ENCODE measurements at regions of chr10 and their contacts with region 1.

Region 1: DNA sequence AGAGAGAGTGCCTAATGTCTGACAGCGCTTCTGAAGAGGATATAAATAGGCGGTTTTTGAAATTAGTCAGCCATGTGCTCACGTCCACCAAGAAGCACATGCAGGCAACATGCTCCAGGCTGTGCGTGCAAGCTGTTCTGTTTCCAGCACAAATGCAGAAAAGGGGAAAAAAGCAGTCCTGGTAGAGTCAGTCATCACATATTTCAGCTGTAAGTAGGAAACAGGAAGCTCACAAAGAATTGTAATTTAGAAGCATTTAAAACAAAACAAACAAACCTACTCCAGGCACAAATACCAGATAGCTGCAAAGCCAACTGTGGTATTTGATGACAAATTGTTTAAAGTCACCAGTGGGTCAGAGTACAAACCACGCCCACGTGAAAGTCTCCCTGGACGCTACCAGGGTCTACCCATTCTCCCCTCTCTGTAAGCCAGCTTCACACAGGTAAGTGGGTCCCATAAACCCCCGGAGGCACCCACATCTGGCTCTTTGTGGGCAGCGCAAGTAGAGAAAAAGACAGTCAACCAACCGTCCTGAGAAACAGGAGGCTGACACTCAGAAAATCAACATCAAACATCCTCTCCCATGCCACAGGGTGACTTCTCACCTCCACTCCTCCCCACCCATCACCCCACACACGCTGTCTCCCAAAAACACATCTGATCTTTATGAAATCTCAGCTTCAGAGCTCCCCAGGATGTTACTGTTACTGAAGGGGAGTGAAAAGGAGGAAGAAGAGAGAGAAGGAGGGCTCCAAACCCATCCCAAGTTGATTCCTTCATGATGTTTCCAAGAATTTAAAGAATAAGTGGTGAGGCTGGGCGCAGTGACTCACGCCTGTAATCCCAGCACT is 186.4 kb downstream of the FAM107B start:
- DNase-seq: peak in 3 of 9 experiments; percentile 55 to 79 (median 65)
- ATAC-seq: peak; percentile 35
- H3K4me3 ChIP-seq: peak overlapping the region; percentile 32 to 34
- H3K4me3 Mint-ChIP-seq: peak overlapping the region; percentile 78
- H3K27ac ChIP-seq: peak overlapping the region; percentile 71 to 82
- H3K27ac Mint-ChIP-seq: peak overlapping the region; percentile 97
- H3K4me1 ChIP-seq: peaks cover 89% of the 10 kb centered on the region
- H3K4me1 Mint-ChIP-seq: peaks cover 92% of the 10 kb centered on the region
- H3K27me3 ChIP-seq: no peaks in the 10 kb centered on the region
- H3K27me3 Mint-ChIP-seq: no peaks in the 10 kb centered on the region
- CTCF ChIP-seq: no peak

Region 2: GRCh38 chr10:14429043-14429700 is 159.1 kb before region 1 on chr10:
- CTCF ChIA-PET with region 1: no interaction called
- POLR2A ChIA-PET with region 1: no interaction called
- intact Hi-C with region 1: no loop called
- DNase-seq: no peak
- ATAC-seq: no peak
- H3K4me3 ChIP-seq: no peak overlapping the region
- H3K4me3 Mint-ChIP-seq: no peak overlapping the region
- H3K27ac ChIP-seq: no peak overlapping the region
- H3K27ac Mint-ChIP-seq: no peak overlapping the region
- H3K4me1 ChIP-seq: no peaks in the 10 kb centered on the region
- H3K4me1 Mint-ChIP-seq: no peaks in the 10 kb centered on the region
- H3K27me3 ChIP-seq: no peaks in the 10 kb centered on the region
- H3K27me3 Mint-ChIP-seq: peaks cover 12% of the 10 kb centered on the region
- CTCF ChIP-seq: no peak

Region 3: GRCh38 chr10:14564268-14564744 is 24.0 kb before region 1 on chr10:
- CTCF ChIA-PET with region 1: interaction called, 4 read pairs
- POLR2A ChIA-PET with region 1: interaction called, 40 read pairs
- intact Hi-C with region 1: loop called (anchors 2 kb)
- DNase-seq: peak in 3 of 9 experiments; percentile 45 to 85 (median 75)
- ATAC-seq: peak; percentile 57
- H3K4me3 ChIP-seq: peak overlapping the region in 1 of 2 experiments; percentile 21
- H3K4me3 Mint-ChIP-seq: peak overlapping the region; percentile 80
- H3K27ac ChIP-seq: peak overlapping the region; percentile 77 to 79
- H3K27ac Mint-ChIP-seq: peak overlapping the region; percentile 98
- H3K4me1 ChIP-seq: peaks cover 90% of the 10 kb centered on the region
- H3K4me1 Mint-ChIP-seq: peaks cover 88% of the 10 kb centered on the region
- H3K27me3 ChIP-seq: no peaks in the 10 kb centered on the region
- H3K27me3 Mint-ChIP-seq: no peaks in the 10 kb centered on the region
- CTCF ChIP-seq: no peak

Region 4: DNA sequence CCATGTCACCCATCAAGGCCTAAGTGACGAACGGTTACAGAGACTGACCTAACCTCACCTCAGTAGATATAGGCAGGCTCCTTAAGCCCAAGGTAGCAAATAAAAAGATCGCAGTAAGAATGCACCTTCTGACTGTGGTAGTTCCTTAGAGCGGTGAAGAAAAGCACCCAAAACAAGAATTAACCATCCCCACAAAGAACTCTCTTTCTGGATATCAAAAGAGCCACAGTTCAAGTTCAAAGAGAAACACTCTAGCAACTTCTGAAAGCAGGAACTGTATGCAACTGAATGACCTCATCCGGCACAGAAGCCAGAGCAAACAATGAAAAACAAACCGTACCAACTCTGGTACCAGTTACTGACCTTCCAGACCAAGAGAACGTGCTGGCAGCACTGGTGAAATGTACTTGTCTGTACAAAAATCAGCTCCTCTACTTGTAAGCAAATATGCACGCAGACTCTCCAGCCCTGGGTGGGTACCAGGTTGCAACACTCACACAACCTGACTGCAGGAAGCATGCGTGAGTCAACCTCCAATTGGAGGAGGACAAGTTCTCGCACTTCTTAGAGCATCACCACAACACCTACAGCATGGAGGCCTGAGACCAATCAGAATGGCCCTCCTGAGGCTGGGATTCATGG is 16.3 kb before region 1 on chr10:
- CTCF ChIA-PET with region 1: interaction called, 5 read pairs
- POLR2A ChIA-PET with region 1: interaction called, 40 read pairs
- intact Hi-C with region 1: loop called (anchors 1 to 2 kb)
- DNase-seq: peak; percentile 46 to 91 (median 68)
- ATAC-seq: peak; percentile 66
- H3K4me3 ChIP-seq: peak overlapping the region; percentile 58 to 65
- H3K4me3 Mint-ChIP-seq: peak overlapping the region; percentile 88
- H3K27ac ChIP-seq: peak overlapping the region; percentile 82 to 89
- H3K27ac Mint-ChIP-seq: peak overlapping the region; percentile 97
- H3K4me1 ChIP-seq: peaks cover 66% of the 10 kb centered on the region
- H3K4me1 Mint-ChIP-seq: peaks cover 89% of the 10 kb centered on the region
- H3K27me3 ChIP-seq: no peaks in the 10 kb centered on the region
- H3K27me3 Mint-ChIP-seq: no peaks in the 10 kb centered on the region
- CTCF ChIP-seq: no peak

Region 5: GRCh38 chr10:14598809-14599764 is 10.8 kb after region 1 on chr10:
- CTCF ChIA-PET with region 1: interaction called, 5 read pairs
- POLR2A ChIA-PET with region 1: interaction called, 5 read pairs
- intact Hi-C with region 1: loop called (anchors 1 to 2 kb)
- DNase-seq: peak in 4 of 9 experiments; percentile 45 to 80 (median 59)
- ATAC-seq: peak; percentile 49
- H3K4me3 ChIP-seq: no peak overlapping the region
- H3K4me3 Mint-ChIP-seq: peak overlapping the region; percentile 35
- H3K27ac ChIP-seq: peak overlapping the region; percentile 52 to 61
- H3K27ac Mint-ChIP-seq: peak overlapping the region; percentile 88
- H3K4me1 ChIP-seq: peaks cover 64% of the 10 kb centered on the region
- H3K4me1 Mint-ChIP-seq: peaks cover 85% of the 10 kb centered on the region
- H3K27me3 ChIP-seq: no peaks in the 10 kb centered on the region
- H3K27me3 Mint-ChIP-seq: no peaks in the 10 kb centered on the region
- CTCF ChIP-seq: no peak

Region 6: GRCh38 chr10:14604181-14605142 is 16.2 kb after region 1 on chr10:
- CTCF ChIA-PET with region 1: interaction called, 4 read pairs
- POLR2A ChIA-PET with region 1: interaction called, 5 read pairs
- intact Hi-C with region 1: loop called (anchors 1 to 2 kb)
- DNase-seq: peak; percentile 39 to 86 (median 73)
- ATAC-seq: peak; percentile 71
- H3K4me3 ChIP-seq: peak overlapping the region; percentile 55 to 66
- H3K4me3 Mint-ChIP-seq: peak overlapping the region; percentile 93
- H3K27ac ChIP-seq: peak overlapping the region; percentile 48
- H3K27ac Mint-ChIP-seq: peak overlapping the region; percentile 94
- H3K4me1 ChIP-seq: peaks cover 44% of the 10 kb centered on the region
- H3K4me1 Mint-ChIP-seq: peaks cover 50% of the 10 kb centered on the region
- H3K27me3 ChIP-seq: no peaks in the 10 kb centered on the region
- H3K27me3 Mint-ChIP-seq: no peaks in the 10 kb centered on the region
- CTCF ChIP-seq: peak; percentile 16

Region 7: GRCh38 chr10:14616955-14617730 is 28.8 kb after region 1 on chr10:
- CTCF ChIA-PET with region 1: no interaction called
- POLR2A ChIA-PET with region 1: no interaction called
- intact Hi-C with region 1: no loop called
- DNase-seq: peak in 1 of 9 experiments; percentile 9
- ATAC-seq: no peak
- H3K4me3 ChIP-seq: no peak overlapping the region
- H3K4me3 Mint-ChIP-seq: no peak overlapping the region
- H3K27ac ChIP-seq: no peak overlapping the region
- H3K27ac Mint-ChIP-seq: peak overlapping the region; percentile 62
- H3K4me1 ChIP-seq: peaks cover 11% of the 10 kb centered on the region
- H3K4me1 Mint-ChIP-seq: peaks cover 24% of the 10 kb centered on the region
- H3K27me3 ChIP-seq: peaks cover 0 to 2% of the 10 kb centered on the region in 2 experiments
- H3K27me3 Mint-ChIP-seq: no peaks in the 10 kb centered on the region
- CTCF ChIP-seq: no peak

Region 8: GRCh38 chr10:14639637-14640036 is 51.3 kb after region 1 on chr10:
- CTCF ChIA-PET with region 1: no interaction called
- POLR2A ChIA-PET with region 1: no interaction called
- intact Hi-C with region 1: no loop called
- DNase-seq: no peak
- ATAC-seq: no peak
- H3K4me3 ChIP-seq: no peak overlapping the region
- H3K4me3 Mint-ChIP-seq: no peak overlapping the region
- H3K27ac ChIP-seq: no peak overlapping the region
- H3K27ac Mint-ChIP-seq: no peak overlapping the region
- H3K4me1 ChIP-seq: no peaks in the 10 kb centered on the region
- H3K4me1 Mint-ChIP-seq: no peaks in the 10 kb centered on the region
- H3K27me3 ChIP-seq: no peaks in the 10 kb centered on the region
- H3K27me3 Mint-ChIP-seq: no peaks in the 10 kb centered on the region
- CTCF ChIP-seq: no peak

Measured in CD8-positive, alpha-beta T cell (primary cell).